ENCODE measurements at regions of chr1 and their contacts with region 1.

Region 1: GRCh38 chr1:112390775-112391602 is 5.0 kb upstream of the CTTNBP2NL start:
- DNase-seq: peak; percentile 84
- H3K4me3 ChIP-seq: peak overlapping the region; percentile 45
- H3K27ac ChIP-seq: peak overlapping the region; percentile 66
- H3K27me3 ChIP-seq: peaks cover 3% of the 10 kb centered on the region
- CTCF ChIP-seq: peak; percentile 88

Region 2: DNA sequence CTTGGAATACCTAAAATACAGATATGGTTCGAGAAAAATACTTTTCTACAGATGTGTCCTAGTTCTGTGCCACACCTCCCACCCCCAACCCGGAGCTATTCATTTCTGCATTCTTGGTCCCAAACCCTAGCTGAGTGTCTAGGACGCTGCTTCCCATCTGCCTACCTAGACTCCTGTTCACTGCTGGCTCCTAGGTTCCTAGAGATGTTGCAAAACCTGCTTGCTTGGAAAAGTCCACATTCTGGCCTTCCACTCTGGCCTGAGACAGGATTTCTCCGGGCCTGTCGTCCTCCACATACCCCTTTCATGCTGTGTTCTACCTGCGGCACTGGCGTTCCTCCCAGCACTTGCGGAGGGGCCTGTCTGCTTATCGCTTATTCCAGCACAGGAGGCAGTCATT is 160.8 kb before region 1 on chr1:
- CTCF ChIA-PET with region 1: no interaction called
- POLR2A ChIA-PET with region 1: no interaction called
- DNase-seq: no peak
- H3K4me3 ChIP-seq: no peak overlapping the region
- H3K27ac ChIP-seq: no peak overlapping the region
- H3K27me3 ChIP-seq: no peaks in the 10 kb centered on the region
- CTCF ChIP-seq: no peak

Region 3: DNA sequence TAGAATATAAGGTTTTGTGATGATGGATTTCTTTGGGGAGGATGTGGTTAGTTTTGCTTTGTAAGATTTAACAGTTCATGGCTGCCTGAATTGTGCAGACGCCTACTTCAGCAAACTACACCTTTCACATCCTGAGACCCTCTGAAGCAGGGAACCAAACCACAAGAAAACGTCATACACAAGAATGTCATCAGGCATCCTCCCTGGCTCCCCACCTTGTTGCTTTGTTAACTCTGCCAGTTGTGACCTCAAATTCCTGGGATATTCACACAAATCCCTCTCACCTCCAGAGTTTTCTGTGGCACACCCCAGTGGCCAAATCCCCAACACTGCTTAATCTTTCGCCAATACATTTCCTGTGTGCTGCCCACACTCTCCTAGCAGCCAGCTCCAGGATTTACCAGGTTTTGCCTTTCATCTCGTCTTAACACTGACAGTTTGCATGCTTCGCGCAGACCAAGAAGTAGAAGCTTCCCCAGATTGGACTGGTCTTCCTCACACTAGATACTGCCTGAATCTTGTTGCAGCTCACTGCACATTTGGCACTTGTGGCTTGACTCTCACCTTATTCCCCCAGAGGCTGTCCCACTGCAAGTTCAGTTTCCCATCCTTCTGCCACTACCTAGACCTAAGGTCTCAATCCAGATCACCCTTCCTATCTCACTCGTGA is 46.1 kb before region 1 on chr1:
- CTCF ChIA-PET with region 1: no interaction called
- POLR2A ChIA-PET with region 1: no interaction called
- DNase-seq: no peak
- H3K4me3 ChIP-seq: no peak overlapping the region
- H3K27ac ChIP-seq: no peak overlapping the region
- H3K27me3 ChIP-seq: peaks cover 10% of the 10 kb centered on the region
- CTCF ChIP-seq: no peak

Region 4: GRCh38 chr1:112418099-112418892 is 27.3 kb after region 1 on chr1:
- CTCF ChIA-PET with region 1: interaction called, 10 read pairs
- POLR2A ChIA-PET with region 1: no interaction called
- DNase-seq: no peak
- H3K4me3 ChIP-seq: no peak overlapping the region
- H3K27ac ChIP-seq: no peak overlapping the region
- H3K27me3 ChIP-seq: no peaks in the 10 kb centered on the region
- CTCF ChIP-seq: no peak

Region 5: GRCh38 chr1:112457241-112457640 is 66.3 kb after region 1 on chr1:
- CTCF ChIA-PET with region 1: interaction called, 14 read pairs
- POLR2A ChIA-PET with region 1: interaction called, 13 read pairs
- DNase-seq: peak; percentile 70
- H3K4me3 ChIP-seq: no peak overlapping the region
- H3K27ac ChIP-seq: peak overlapping the region; percentile 82
- H3K27me3 ChIP-seq: no peaks in the 10 kb centered on the region
- CTCF ChIP-seq: no peak

Region 6: DNA sequence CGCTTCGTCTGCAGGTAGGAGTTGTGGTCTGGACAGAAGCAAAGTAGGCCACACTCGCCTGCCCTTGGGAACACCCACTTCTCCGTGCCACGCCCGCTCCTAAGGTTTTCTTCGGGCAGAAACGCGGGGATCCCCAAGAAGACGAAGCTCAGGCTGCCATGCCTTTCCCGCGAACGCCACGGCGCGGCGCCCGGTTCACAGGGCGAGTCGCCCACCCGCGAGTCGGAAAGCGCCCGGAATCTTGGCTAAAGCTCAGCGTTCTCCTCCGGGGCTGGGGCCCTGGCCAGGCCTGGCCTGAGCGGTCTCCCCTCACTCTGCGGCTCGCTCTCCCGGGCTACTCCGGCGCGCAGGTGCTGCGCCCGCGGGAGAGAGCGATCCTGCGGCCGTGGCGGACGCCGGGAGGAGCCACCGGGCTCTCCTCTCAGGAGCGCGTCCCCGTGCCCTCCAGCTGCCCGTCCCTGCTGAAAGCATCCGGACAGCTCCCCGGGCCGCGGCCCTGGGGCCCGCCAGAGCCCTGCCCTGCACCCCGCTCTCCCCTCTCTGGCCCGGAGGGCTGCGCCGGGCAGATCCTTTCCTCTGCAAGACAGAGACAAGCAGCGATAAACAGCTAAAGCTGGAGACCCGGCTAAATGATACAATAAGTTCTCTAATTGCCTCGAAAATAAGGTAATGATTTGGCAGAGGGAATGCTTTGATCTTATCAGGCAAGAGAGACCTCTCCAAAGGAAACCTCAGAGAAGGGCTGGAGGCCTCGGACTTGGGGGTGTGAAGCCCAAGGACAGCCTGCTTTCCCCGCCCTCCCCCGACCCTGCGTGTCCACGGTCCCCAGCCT is 111.0 kb after region 1 on chr1:
- CTCF ChIA-PET with region 1: interaction called, 42 read pairs
- POLR2A ChIA-PET with region 1: interaction called, 3 read pairs
- DNase-seq: no peak
- H3K4me3 ChIP-seq: peak overlapping the region; percentile 55
- H3K27ac ChIP-seq: no peak overlapping the region
- H3K27me3 ChIP-seq: peaks cover 14% of the 10 kb centered on the region
- CTCF ChIP-seq: peak; percentile 88

Region 7: GRCh38 chr1:112619520-112620376 is 228.8 kb after region 1 on chr1 and contains the start of gene CAPZA1:
- CTCF ChIA-PET with region 1: interaction called, 130 read pairs
- POLR2A ChIA-PET with region 1: interaction called, 11 read pairs
- DNase-seq: peak; percentile 78
- H3K4me3 ChIP-seq: peak within 1 kb of the TSS; percentile 98
- H3K27ac ChIP-seq: peak within 1 kb of the TSS; percentile 96
- H3K27me3 ChIP-seq: no peaks in the 10 kb centered on the region
- CTCF ChIP-seq: no peak
- polyA plus RNA-seq, gene CAPZA1: 195 and 273 TPM in 2 replicates

Measured in AG04450 (cell line).